Activated CD8-positive, alpha-beta T cell treated with anti-CD3 and anti-CD28 coated beads, Interleukin-2, amount 10 ng/mL, durations not matched to agents 7 days and 5 days (primary cell): ENCODE measurements at regions of chr3 and their contacts with region 1.

Region 1: DNA sequence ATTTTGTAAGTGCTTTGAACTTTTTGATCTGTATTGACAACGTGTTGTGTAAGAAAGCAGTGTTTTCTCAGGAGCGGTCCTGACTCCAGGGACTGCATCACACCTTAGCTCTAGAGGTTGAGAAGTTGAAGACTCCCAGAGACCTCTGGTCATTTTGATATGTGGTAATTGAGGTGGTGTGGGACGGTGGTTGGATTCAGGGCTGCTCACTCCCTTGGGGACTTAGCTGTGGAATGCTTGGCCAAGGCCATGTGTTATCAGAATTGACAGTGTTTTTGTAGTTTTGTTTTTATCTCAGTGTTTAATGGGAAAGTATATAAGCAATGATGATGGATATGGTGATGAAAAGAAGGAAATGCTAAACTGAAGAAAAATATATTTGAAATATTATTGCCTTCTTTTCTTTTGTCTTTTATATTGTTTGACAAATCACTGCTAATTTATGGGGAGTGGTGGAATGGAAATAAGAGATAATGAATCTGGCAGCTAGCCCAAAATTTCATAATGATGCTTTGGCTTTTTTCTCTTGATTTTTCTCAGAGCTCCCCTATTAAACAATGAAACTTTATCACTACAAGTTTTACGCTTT is 16.0 kb downstream of the CMSS1 start:
- DNase-seq: no peak
- ATAC-seq: no peak
- H3K4me3 Mint-ChIP-seq: no peak overlapping the region
- H3K27ac Mint-ChIP-seq: no peak overlapping the region
- H3K4me1 Mint-ChIP-seq: peaks cover 3% of the 10 kb centered on the region
- H3K27me3 Mint-ChIP-seq: no peaks in the 10 kb centered on the region

Region 2: DNA sequence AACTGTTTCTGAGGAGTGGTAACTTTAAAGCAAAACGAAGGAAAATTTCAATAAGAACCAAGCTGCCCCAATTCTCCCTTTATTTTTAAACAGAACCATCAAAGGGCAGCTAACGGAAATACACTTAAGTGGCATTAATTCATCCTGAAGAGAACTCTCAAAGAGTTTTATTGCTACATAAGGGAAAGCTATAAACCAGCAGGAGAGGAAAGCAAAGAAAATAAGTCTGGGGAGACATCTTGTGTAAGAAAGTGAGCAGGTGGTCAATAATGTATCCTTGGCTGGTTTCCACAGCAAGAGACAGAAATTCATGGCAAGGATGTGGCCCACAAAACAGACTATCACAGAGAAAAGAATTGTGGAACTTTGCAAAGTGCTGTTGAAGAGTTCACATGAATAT is 56.0 kb before region 1 on chr3:
- CTCF ChIA-PET with region 1: no interaction called
- POLR2A ChIA-PET with region 1: no interaction called
- DNase-seq: no peak
- ATAC-seq: no peak
- H3K4me3 Mint-ChIP-seq: no peak overlapping the region
- H3K27ac Mint-ChIP-seq: no peak overlapping the region
- H3K4me1 Mint-ChIP-seq: peaks cover 4% of the 10 kb centered on the region
- H3K27me3 Mint-ChIP-seq: peaks cover 11% of the 10 kb centered on the region

Region 3: GRCh38 chr3:99817437-99818240 is 16.1 kb before region 1 on chr3 and contains the start of gene CMSS1:
- CTCF ChIA-PET with region 1: interaction called, 35 read pairs
- POLR2A ChIA-PET with region 1: no interaction called
- DNase-seq: peak; percentile 96
- ATAC-seq: peak; percentile 96
- H3K4me3 Mint-ChIP-seq: peak within 1 kb of the TSS; percentile 92
- H3K27ac Mint-ChIP-seq: peak within 1 kb of the TSS; percentile 98
- H3K4me1 Mint-ChIP-seq: peaks cover 26% of the 10 kb centered on the region
- H3K27me3 Mint-ChIP-seq: no peaks in the 10 kb centered on the region
- total RNA-seq, gene CMSS1: 42.1 to 42.6 TPM

Region 4: DNA sequence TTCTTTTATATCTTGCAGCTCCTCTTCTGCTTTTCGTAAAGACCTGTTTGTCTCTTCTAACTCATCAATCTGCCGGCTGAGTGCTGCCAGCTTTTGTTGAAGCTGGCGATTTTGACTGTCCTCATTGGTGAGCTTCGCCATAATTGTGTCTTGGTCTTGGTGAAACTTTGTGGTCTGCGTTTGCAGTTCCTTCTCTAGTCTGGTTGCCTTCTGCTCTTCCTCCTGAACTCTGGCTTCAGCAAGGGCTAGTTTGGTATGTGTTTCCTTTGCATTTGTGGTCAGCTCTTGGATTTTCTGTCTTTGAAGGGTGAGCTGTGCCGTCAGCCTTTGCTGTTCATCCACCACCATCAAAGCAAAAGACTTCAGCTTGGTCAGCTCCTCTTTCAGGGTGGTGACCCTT is 16.9 kb after region 1 on chr3:
- CTCF ChIA-PET with region 1: interaction called, 10 read pairs
- POLR2A ChIA-PET with region 1: no interaction called
- DNase-seq: no peak
- ATAC-seq: no peak
- H3K4me3 Mint-ChIP-seq: no peak overlapping the region
- H3K27ac Mint-ChIP-seq: no peak overlapping the region
- H3K4me1 Mint-ChIP-seq: peaks cover 12% of the 10 kb centered on the region
- H3K27me3 Mint-ChIP-seq: no peaks in the 10 kb centered on the region

Region 5: DNA sequence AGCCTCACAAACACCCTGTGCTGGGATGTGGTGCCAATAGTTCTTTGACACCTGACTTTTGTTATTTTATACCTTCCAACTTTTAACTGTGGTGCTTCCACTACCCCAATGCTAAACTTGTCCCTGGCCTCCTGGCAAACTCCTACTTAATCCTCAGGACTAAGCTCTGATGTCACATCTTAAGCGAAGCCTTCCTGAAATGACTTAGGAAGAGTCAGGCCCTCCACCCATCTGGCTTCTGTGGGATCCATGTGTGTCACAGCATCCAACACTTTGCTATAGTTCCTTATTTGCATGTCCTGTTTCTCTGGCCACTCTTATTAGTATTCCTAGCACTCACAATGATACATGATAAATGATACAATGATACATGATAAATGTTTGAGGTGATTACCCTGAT is 147.4 kb after region 1 on chr3:
- CTCF ChIA-PET with region 1: no interaction called
- POLR2A ChIA-PET with region 1: no interaction called
- DNase-seq: no peak
- ATAC-seq: no peak
- H3K4me3 Mint-ChIP-seq: no peak overlapping the region
- H3K27ac Mint-ChIP-seq: no peak overlapping the region
- H3K4me1 Mint-ChIP-seq: no peaks in the 10 kb centered on the region
- H3K27me3 Mint-ChIP-seq: no peaks in the 10 kb centered on the region

Region 6: DNA sequence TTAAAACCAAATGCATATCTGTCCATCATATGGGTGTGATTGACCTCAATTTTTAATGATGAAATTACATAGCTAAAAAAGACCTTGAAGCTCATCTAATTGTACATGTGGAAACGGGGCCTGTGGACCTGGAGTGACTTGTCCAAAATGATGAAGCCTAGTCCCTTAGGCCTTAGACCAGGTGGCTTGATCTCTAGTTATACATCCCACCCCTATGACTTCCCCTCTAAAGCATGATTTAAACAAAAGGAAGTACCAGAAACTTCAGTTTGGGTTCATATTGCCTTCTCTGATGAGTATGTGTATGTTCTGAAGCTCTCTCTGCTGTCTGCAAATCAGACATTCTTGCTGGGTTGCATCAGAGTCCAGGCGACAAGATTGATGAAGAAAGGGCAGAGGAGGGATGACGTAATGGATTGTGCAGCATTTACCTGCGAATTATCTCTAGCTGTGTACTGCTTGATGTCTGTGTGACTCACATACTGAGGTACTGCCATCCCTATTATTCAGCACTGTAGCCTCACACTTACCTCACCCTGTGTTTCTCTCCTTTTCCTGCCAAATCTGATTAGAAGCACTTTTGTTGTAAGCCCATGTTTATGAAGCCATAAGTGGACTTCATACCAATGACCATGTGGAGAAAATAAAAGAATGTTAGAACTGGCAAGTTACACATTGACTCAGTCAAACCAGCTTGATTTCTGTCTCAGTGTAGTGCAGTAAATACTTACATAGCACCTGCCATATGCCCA is 169.1 kb after region 1 on chr3:
- CTCF ChIA-PET with region 1: no interaction called
- POLR2A ChIA-PET with region 1: no interaction called
- DNase-seq: no peak
- ATAC-seq: no peak
- H3K4me3 Mint-ChIP-seq: no peak overlapping the region
- H3K27ac Mint-ChIP-seq: no peak overlapping the region
- H3K4me1 Mint-ChIP-seq: peaks cover 8% of the 10 kb centered on the region
- H3K27me3 Mint-ChIP-seq: no peaks in the 10 kb centered on the region

Region 7: DNA sequence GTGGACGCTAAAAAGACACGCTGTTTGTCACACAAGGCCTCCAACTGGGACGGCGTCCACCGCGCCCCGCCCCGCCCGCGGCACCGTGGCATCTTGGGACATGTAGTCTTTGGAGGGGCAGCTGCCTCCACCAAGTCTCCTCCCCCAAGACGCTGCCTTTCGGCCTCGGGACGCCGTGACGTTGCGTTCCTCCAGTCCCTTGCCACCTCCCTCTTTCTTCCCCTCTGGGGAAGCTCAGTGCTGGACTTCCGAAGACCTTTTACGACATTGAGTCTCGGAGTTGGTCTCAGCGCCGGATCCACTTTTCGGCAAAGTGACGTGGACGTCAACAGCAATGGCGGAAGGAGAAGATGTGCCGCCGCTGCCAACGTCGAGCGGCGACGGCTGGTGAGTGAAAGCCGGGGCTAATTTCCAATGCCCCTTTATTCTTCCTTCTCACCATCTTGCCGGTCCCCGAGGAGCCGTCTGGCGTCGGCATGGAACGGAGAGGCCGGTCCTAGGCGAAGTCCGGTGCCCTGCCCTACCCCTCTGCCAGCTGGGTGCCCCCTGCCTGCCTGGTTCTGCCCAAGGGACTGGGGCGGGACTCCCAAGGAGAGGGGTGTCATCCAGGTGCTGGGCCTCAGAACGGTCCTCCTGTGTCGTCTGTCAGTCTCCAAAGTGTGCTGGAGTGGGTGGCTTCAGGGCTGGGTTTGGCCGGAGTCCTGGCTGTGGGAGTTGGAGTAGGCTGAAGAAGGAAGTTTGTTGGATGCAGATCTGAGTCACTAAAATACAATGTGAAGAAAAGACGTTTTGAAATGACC is 427.2 kb after region 1 on chr3 and contains the start of gene TBC1D23:
- CTCF ChIA-PET with region 1: interaction called, 78 read pairs
- POLR2A ChIA-PET with region 1: no interaction called
- DNase-seq: peak; percentile 99
- ATAC-seq: peak; percentile 100
- H3K4me3 Mint-ChIP-seq: peak within 1 kb of the TSS; percentile 88
- H3K27ac Mint-ChIP-seq: peak within 1 kb of the TSS; percentile 94
- H3K4me1 Mint-ChIP-seq: peaks cover 51% of the 10 kb centered on the region
- H3K27me3 Mint-ChIP-seq: no peaks in the 10 kb centered on the region
- total RNA-seq, gene TBC1D23: 28.6 to 29.3 TPM